ENCODE measurements at regions of chr5 and their contacts with region 1.

Region 1: DNA sequence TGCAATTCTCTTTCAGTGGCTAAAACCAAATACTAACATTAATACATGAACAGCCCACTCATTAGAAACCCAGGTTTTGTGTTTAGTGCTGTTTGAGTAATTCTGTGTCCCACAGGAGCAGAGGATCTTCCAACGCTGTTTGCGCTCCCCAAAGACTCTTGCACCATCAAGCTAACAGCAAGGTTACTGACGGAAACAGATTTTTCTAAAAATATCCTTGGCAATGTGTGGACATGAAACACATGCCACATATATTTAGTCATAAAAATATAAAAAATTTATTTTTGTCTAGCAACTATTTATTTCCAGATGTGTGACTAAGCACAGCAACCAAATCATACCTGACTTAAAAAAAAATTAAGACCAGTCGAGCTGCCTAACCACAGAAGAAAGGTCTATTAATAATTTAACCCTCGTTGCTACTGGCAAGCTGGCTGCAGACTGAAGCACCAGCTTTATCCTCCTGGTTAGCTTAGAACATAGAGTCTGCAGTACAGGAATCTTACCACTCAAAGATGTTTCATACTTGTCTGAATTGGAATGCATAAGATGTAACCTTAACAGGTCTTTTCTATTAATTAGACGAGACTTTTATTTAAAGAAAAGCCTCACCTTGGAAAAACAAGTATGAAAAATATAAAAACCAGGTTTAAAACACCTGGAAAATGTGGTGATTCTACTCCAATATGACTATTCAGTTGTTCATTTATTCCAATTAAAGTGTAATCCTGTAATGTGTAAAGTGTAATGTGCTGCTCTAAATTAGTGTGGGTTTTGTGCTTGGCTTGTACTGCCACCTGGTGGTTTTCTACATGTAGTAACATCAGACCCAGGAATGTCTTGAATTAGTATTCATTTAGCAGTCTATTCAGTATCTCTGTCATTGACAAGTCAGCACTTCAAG is 272.5 kb downstream of the EPB41L4A start:
- DNase-seq: no peak
- ATAC-seq: peak; percentile 96
- H3K4me3 Mint-ChIP-seq: no peak overlapping the region
- H3K27ac Mint-ChIP-seq: no peak overlapping the region
- H3K4me1 Mint-ChIP-seq: no peaks in the 10 kb centered on the region
- H3K27me3 Mint-ChIP-seq: peaks cover 1% of the 10 kb centered on the region
- CTCF ChIP-seq: peak; percentile 96

Region 2: DNA sequence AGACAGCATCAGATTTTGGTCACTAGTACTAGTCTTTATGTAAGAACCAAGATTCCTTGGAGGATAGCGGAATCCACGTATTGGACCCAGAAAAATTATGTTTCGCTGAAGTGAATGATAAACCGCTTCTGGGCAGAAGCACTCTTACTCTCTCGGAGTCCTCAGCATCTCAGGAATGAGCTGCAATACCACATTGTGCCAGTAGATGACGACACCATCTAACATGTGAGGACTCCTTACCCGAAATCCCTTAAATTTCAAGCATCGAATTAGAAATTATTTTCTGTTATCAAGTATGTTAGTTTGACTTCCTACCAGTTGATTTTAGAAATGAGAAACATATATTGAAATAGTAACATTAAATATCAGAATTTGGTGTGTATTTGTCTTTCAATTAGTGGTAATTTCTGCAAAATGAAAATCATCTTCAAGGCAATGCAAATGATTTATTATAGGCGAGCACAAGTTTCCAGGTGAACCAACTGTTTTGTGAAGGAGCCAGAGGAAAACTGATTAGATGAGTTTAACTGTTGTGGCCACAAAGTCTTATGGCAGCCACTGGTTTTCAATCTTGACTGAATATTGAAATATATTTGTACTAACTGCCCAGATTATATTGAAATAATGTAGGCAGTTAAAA is 988.4 kb before region 1 on chr5:
- CTCF ChIA-PET with region 1: interaction called, 15 read pairs
- POLR2A ChIA-PET with region 1: no interaction called
- intact Hi-C with region 1: loop called (anchors 1 kb)
- DNase-seq: no peak
- ATAC-seq: peak; percentile 49
- H3K4me3 Mint-ChIP-seq: no peak overlapping the region
- H3K27ac Mint-ChIP-seq: no peak overlapping the region
- H3K4me1 Mint-ChIP-seq: no peaks in the 10 kb centered on the region
- H3K27me3 Mint-ChIP-seq: peaks cover 10% of the 10 kb centered on the region
- CTCF ChIP-seq: peak; percentile 99

Region 3: GRCh38 chr5:111242606-111243005 is 904.0 kb before region 1 on chr5:
- CTCF ChIA-PET with region 1: no interaction called
- POLR2A ChIA-PET with region 1: no interaction called
- intact Hi-C with region 1: no loop called
- DNase-seq: no peak
- ATAC-seq: no peak
- H3K4me3 Mint-ChIP-seq: no peak overlapping the region
- H3K27ac Mint-ChIP-seq: no peak overlapping the region
- H3K4me1 Mint-ChIP-seq: no peaks in the 10 kb centered on the region
- H3K27me3 Mint-ChIP-seq: no peaks in the 10 kb centered on the region
- CTCF ChIP-seq: no peak

Region 4: DNA sequence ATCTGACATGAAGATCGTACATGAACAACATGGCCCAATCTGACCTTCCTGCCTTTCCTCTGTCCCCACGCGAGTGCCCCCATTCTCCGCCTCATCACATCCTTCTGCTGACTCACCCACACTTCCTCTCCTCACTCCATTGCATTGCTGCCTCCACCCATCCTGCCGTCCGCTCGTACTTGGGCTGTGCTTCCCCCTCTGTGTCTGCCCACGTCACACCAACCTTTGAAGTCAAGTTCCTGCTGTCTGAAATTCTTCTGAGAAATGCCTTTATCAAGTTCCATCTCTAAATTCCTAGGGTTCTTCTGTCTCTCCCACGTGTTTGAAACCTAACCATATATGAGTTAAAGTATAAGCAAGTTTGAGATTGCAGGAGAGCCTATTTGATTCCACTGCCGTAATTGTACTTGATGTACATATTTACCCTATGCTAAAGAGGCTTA is 616.3 kb before region 1 on chr5:
- CTCF ChIA-PET with region 1: interaction called, 10 read pairs
- POLR2A ChIA-PET with region 1: no interaction called
- intact Hi-C with region 1: no loop called
- DNase-seq: peak; percentile 61
- ATAC-seq: peak; percentile 100
- H3K4me3 Mint-ChIP-seq: peak overlapping the region; percentile 49
- H3K27ac Mint-ChIP-seq: peak overlapping the region; percentile 75
- H3K4me1 Mint-ChIP-seq: peaks cover 23% of the 10 kb centered on the region
- H3K27me3 Mint-ChIP-seq: no peaks in the 10 kb centered on the region
- CTCF ChIP-seq: no peak

Region 5: GRCh38 chr5:111685971-111686370 is 460.6 kb before region 1 on chr5:
- CTCF ChIA-PET with region 1: interaction called, 10 read pairs
- POLR2A ChIA-PET with region 1: no interaction called
- intact Hi-C with region 1: loop called (anchors 1 kb)
- DNase-seq: no peak
- ATAC-seq: no peak
- H3K4me3 Mint-ChIP-seq: no peak overlapping the region
- H3K27ac Mint-ChIP-seq: no peak overlapping the region
- H3K4me1 Mint-ChIP-seq: no peaks in the 10 kb centered on the region
- H3K27me3 Mint-ChIP-seq: no peaks in the 10 kb centered on the region
- CTCF ChIP-seq: no peak

Region 6: DNA sequence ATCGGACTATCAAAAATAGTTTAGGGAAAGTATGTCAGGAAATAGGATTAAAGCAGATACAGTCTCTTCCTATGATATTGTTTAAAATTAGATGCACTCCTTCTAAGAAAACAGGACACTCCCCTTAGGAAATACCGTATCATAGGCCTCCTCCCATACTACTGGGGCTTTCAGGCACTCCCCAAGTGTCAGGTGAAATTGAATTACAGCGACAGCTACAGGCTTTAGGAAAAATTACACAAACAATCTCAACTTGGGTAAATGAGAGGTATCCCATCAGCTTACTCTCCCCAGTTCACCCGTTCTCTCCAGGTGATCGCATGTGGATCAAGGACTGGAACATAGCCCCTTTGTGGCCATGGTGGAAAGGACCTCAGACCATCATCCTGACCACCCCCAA is 382.9 kb after region 1 on chr5:
- CTCF ChIA-PET with region 1: no interaction called
- POLR2A ChIA-PET with region 1: no interaction called
- intact Hi-C with region 1: no loop called
- DNase-seq: no peak
- ATAC-seq: peak; percentile 53
- H3K4me3 Mint-ChIP-seq: no peak overlapping the region
- H3K27ac Mint-ChIP-seq: peak overlapping the region; percentile 48
- H3K4me1 Mint-ChIP-seq: peaks cover 96% of the 10 kb centered on the region
- H3K27me3 Mint-ChIP-seq: no peaks in the 10 kb centered on the region
- CTCF ChIP-seq: no peak